Activated CD8-positive, alpha-beta T cell treated with anti-CD3 and anti-CD28 coated beads for 36 hours (primary cell): ENCODE measurements at regions of chr9 and their contacts with region 1.

Region 1: DNA sequence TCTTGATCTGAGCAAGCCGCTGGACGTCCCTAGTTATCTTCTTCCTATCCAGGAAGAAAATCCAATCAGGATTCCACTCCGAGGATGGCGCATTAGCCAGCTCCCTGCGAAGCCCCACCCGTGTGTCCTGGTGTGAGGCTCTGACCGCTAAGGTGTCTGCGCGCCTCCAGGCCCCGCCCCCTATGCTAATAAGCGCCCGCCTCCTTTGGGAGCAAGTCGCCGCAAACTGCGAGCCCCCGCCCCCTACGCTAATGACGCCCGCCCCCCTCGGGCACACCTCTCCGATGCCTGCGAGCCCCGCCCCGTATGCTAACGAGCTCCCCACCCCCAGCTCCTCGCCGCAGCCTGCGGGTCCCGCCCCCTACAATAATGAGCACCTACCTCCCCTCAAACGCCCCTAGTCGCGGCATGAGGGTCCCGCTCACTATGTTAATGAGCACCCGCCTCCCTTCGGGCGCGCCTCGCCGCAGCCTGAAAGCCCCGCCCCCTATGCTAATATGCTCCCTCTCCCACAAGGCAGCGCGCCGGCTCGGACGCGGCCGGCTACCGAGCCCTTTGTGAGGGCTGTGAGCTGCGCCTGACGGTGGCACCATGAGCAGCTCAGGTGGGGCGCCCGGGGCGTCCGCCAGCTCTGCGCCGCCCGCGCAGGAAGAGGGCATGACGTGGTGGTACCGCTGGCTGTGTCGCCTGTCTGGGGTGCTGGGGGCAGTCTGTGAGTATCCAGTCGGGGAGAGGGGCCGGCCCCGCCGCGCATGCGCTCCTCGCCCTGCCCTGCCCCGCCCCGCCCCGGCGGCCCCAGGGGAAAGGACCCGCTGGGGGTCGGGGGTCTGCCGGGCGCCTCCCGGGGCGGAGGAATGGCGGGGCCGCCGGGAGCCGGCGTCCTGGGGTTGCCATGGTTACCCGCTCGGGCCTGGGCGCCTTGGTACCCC is at the start of gene CACFD1:
- DNase-seq: peak; percentile 96
- ATAC-seq: peak; percentile 90
- H3K4me3 Mint-ChIP-seq: peak within 1 kb of the TSS; percentile 78
- H3K27ac Mint-ChIP-seq: peak within 1 kb of the TSS; percentile 87
- H3K4me1 Mint-ChIP-seq: peaks cover 8% of the 10 kb centered on the region
- H3K27me3 Mint-ChIP-seq: no peaks in the 10 kb centered on the region
- CTCF ChIP-seq: no peak
- total RNA-seq, gene CACFD1: 1.3 to 1.4 TPM

Region 2: DNA sequence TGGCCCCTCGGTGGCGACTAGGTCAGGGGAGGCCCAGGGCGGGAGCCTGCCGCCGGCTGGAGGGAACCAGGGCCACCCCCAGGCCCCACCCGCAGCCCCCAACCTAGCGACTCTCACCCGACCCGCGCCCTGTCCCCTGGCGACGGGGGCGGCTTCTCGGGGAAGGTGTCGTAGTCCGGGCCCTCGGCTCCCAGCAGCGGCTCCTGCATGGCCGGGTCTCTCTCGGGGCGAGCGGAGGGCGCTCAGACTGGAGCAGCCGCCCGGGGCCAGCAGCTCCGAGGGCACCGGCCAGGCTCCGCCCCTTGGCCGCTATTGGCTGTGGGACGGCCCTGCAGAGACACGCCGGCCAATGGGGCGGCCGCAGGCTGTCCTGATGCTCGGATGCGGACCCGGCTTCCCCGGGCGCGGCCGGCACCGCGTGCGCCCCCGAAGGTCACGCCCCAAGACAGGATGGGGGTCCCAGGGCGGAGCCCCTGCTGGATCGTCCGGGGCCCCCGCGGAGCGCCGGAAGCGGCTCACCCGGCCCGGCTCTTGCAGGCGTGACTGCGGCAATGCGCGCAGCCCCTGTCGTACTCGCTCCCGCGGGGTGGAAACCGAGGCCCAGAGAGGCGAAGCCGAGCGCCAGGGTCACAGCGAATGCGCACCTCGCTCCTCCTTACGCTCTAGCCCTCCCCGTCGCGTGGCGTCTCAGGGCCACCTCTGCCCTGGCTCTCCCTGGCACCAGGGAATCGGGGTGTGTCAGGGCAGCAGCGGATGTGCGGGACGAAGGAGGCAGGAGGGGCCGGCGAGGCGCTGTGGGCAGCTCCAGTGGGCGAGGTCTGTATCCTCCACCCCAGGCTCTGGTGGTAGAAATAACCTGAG is 19.3 kb after region 1 on chr9 and contains the start of gene SLC2A6:
- CTCF ChIA-PET with region 1: interaction called, 12 read pairs
- POLR2A ChIA-PET with region 1: interaction called, 5 read pairs
- intact Hi-C with region 1: no loop called
- DNase-seq: peak; percentile 90
- ATAC-seq: peak; percentile 98
- H3K4me3 Mint-ChIP-seq: peak within 1 kb of the TSS; percentile 77
- H3K27ac Mint-ChIP-seq: peak within 1 kb of the TSS; percentile 42
- H3K4me1 Mint-ChIP-seq: peaks cover 8% of the 10 kb centered on the region
- H3K27me3 Mint-ChIP-seq: no peaks in the 10 kb centered on the region
- CTCF ChIP-seq: no peak
- total RNA-seq, gene SLC2A6: 5.4 to 6.7 TPM

Region 3: GRCh38 chr9:133494636-133495326 is 35.0 kb after region 1 on chr9:
- CTCF ChIA-PET with region 1: no interaction called
- POLR2A ChIA-PET with region 1: no interaction called
- intact Hi-C with region 1: no loop called
- DNase-seq: no peak
- ATAC-seq: no peak
- H3K4me3 Mint-ChIP-seq: no peak overlapping the region
- H3K27ac Mint-ChIP-seq: no peak overlapping the region
- H3K4me1 Mint-ChIP-seq: no peaks in the 10 kb centered on the region
- H3K27me3 Mint-ChIP-seq: no peaks in the 10 kb centered on the region
- CTCF ChIP-seq: no peak